Psoas muscle (tissue), 8 donors: ENCODE measurements at regions of chr14 and their contacts with region 1.

Region 1: GRCh38 chr14:30706704-30707103 is 84.6 kb downstream of the SCFD1 start:
- DNase-seq: no peak
- ATAC-seq: no peak
- H3K4me3 ChIP-seq: no peak overlapping the region
- H3K27ac ChIP-seq: no peak overlapping the region
- H3K4me1 ChIP-seq: no peaks in the 10 kb centered on the region
- H3K27me3 ChIP-seq: no peaks in the 10 kb centered on the region
- CTCF ChIP-seq: no peak

Region 2: DNA sequence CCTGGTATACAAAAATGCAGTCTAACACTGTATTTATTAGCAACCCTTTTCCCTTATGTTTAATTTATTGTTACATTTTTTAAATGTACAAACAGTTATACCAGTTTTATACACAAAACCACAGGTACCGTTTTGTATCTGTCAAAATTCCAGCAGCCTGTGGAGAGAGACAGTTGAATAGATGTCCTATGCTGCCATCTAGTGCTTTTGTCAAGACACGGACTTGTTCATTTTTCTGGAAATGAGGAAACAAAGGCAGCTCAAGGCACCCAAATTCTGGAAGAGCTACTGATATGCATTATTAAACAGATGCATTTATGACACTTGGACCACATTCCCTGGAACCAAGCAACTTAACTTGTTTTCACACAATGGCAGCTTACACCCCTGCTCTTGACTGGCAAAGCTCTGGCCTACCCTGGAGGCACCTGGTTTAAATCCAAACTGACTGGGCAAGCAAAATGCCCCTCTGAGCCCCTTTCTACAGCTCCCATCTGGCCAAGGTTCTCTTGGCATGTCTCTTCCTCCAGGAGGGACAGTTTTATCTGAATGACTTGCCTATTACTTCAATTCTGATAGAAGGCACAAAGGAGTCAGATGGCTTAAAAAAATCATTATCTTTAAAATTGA is 492.1 kb before region 1 on chr14:
- intact Hi-C with region 1: no loop called
- DNase-seq: no peak
- ATAC-seq: peak in 3 of 4 donors; percentile 42 to 77 (median 63)
- H3K4me3 ChIP-seq: no peak overlapping the region
- H3K27ac ChIP-seq: no peak overlapping the region
- H3K4me1 ChIP-seq: no peaks in the 10 kb centered on the region
- H3K27me3 ChIP-seq: no peaks in the 10 kb centered on the region
- CTCF ChIP-seq: peak; percentile 52

Region 3: GRCh38 chr14:30656190-30656632 is 50.5 kb before region 1 on chr14:
- intact Hi-C with region 1: loop called in 1 of 2 experiments (anchors 10 kb)
- DNase-seq: no peak
- ATAC-seq: peak in 3 of 4 donors; percentile 49 to 79 (median 58)
- H3K4me3 ChIP-seq: no peak overlapping the region
- H3K27ac ChIP-seq: no peak overlapping the region
- H3K4me1 ChIP-seq: no peaks in the 10 kb centered on the region
- H3K27me3 ChIP-seq: no peaks in the 10 kb centered on the region
- CTCF ChIP-seq: peak; percentile 62

Region 4: GRCh38 chr14:30751641-30752416 is 45.1 kb after region 1 on chr14:
- intact Hi-C with region 1: no loop called
- DNase-seq: no peak
- ATAC-seq: no peak
- H3K4me3 ChIP-seq: no peak overlapping the region
- H3K27ac ChIP-seq: no peak overlapping the region
- H3K4me1 ChIP-seq: no peaks in the 10 kb centered on the region
- H3K27me3 ChIP-seq: peaks cover 0 to 2% (median 0%) of the 10 kb centered on the region in 3 donors
- CTCF ChIP-seq: no peak